ENCODE measurements at regions of chr5 and their contacts with region 1.

Region 1: DNA sequence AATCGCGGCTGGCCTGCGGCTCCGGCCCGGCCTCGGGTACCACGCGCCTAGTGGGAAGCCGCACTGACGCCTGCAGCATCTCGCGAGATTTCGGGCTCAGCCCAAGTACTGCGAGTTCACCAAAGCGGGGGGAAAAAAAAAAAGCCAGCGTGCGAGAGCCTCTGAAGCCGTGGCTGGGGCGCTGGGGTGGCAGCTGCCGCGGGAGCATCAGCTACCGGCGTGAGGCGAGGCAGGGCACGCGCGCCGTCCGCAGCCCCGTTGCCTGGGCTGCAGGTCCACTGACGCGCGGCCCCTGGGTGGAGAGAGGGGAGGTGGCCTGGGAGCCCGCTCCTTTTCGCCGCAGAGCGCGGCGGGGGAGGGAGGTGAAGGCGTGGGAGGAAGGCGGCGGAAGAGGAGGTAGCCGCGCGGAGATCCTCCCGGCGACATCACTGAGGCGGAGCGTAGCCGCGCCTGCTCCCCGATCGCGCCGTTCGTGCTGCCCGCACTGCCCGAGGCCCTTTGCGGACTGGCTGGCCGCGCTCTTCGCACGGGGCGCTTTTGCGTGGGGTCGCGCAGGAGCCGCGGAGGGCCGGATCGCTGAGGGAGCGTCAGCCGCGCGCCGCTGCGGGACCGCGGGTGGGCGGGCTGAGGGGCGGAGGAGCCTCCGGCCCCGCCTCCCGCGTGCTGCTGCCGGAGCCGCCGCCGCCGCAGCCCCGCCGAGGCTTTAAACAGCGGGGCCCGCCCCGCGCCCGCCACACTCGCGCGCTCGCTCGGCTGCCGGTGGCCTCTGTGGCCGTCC is at the start of gene SLC12A2:
- DNase-seq: peak; percentile 91 to 93
- ATAC-seq: peak; percentile 90 to 94 (median 90)
- H3K4me3 ChIP-seq: peak within 1 kb of the TSS; percentile 72 to 95 (median 78)
- H3K27ac ChIP-seq: peak within 1 kb of the TSS; percentile 85 to 99 (median 98)
- H3K4me1 ChIP-seq: peaks cover 0 to 75% (median 61%) of the 10 kb centered on the region in 9 donors
- H3K27me3 ChIP-seq: peaks cover 0 to 6% (median 0%) of the 10 kb centered on the region in 7 donors
- CTCF ChIP-seq: no peak
- total RNA-seq, gene SLC12A2: 11.9 to 23.0 (median 16.5) TPM

Region 2: GRCh38 chr5:127564002-127564769 is 519.0 kb before region 1 on chr5:
- intact Hi-C with region 1: loop called in 1 of 10 experiments (anchors 10 kb)
- DNase-seq: peak in 1 of 2 donors; percentile 47
- ATAC-seq: peak in 5 of 8 donors; percentile 38 to 72 (median 64)
- H3K4me3 ChIP-seq: no peak overlapping the region
- H3K27ac ChIP-seq: no peak overlapping the region
- H3K4me1 ChIP-seq: peaks cover 0 to 5% (median 0%) of the 10 kb centered on the region in 9 donors
- H3K27me3 ChIP-seq: peaks cover 0 to 6% (median 0%) of the 10 kb centered on the region in 7 donors
- CTCF ChIP-seq: peak; percentile 23 to 79 (median 74)

Region 3: GRCh38 chr5:127766676-127767340 is 316.4 kb before region 1 on chr5:
- intact Hi-C with region 1: loop called in 4 of 10 experiments (anchors 10 kb)
- DNase-seq: no peak
- ATAC-seq: peak in 4 of 8 donors; percentile 11 to 62 (median 44)
- H3K4me3 ChIP-seq: no peak overlapping the region
- H3K27ac ChIP-seq: peak overlapping the region in 5 of 10 donors; percentile 3 to 57 (median 9)
- H3K4me1 ChIP-seq: peaks cover 0 to 31% (median 14%) of the 10 kb centered on the region in 9 donors
- H3K27me3 ChIP-seq: no peaks in the 10 kb centered on the region
- CTCF ChIP-seq: no peak

Region 4: GRCh38 chr5:127820910-127821553 is 262.2 kb before region 1 on chr5:
- intact Hi-C with region 1: no loop called
- DNase-seq: no peak
- ATAC-seq: no peak
- H3K4me3 ChIP-seq: no peak overlapping the region
- H3K27ac ChIP-seq: no peak overlapping the region
- H3K4me1 ChIP-seq: no peaks in the 10 kb centered on the region
- H3K27me3 ChIP-seq: no peaks in the 10 kb centered on the region
- CTCF ChIP-seq: no peak

Region 5: GRCh38 chr5:127909078-127909477 is 174.1 kb before region 1 on chr5:
- intact Hi-C with region 1: loop called in 1 of 10 experiments (anchors 5 kb)
- DNase-seq: peak in 1 of 2 donors; percentile 7
- ATAC-seq: peak in 5 of 8 donors; percentile 58 to 76 (median 66)
- H3K4me3 ChIP-seq: no peak overlapping the region
- H3K27ac ChIP-seq: peak overlapping the region in 2 of 10 donors; percentile 7 to 33
- H3K4me1 ChIP-seq: peaks cover 0 to 25% (median 4%) of the 10 kb centered on the region in 9 donors
- H3K27me3 ChIP-seq: no peaks in the 10 kb centered on the region
- CTCF ChIP-seq: peak in 8 of 9 donors; percentile 16 to 68 (median 48)

Region 6: GRCh38 chr5:127975935-127976334 is 107.3 kb before region 1 on chr5:
- intact Hi-C with region 1: loop called in 1 of 10 experiments (anchors 5 kb)
- DNase-seq: no peak
- ATAC-seq: peak in 1 of 8 donors; percentile 6
- H3K4me3 ChIP-seq: no peak overlapping the region
- H3K27ac ChIP-seq: peak overlapping the region in 7 of 10 donors; percentile 0 to 77 (median 36)
- H3K4me1 ChIP-seq: peaks cover 0 to 27% (median 9%) of the 10 kb centered on the region in 9 donors
- H3K27me3 ChIP-seq: no peaks in the 10 kb centered on the region
- CTCF ChIP-seq: no peak